ENCODE measurements at regions of chr14 and their contacts with region 1.

Region 1: DNA sequence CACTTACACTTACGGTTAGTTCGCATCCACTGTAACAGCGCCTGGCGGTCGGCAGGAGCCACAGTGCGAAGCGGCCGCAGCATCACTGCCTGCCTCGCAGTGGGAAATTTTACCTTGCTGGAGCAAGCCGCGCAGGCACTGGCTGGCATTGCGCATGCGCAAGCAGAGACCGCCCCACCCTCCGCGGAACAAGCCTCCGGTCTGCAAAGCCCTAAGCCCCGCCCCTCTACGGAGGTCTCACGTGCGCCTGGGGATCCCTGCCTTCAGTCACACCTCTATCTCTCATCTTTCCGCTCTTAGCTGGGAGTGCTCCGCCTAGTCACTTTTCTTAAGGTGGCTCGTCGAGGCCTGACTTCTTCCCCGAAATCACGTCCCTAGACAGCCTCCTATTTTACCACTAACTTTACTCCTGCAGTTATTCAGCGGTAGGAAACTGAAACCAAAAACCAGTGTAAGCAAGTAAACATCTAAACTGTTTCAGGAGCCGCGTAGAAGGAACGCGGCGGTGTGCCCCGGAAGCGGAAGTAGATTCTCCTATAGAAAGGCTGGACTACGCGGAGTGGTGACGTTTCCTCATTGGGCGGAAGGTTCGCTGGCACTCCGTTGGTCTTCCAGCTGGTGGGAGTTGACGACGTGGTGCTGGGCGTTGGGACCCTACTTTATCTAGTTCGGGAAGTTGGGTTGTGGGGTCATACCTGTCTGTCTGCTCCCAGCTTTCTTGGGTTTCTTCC is at the start of gene SRP54:
- DNase-seq: peak; percentile 100
- H3K4me3 Mint-ChIP-seq: no peak within 1 kb of the TSS
- H3K27ac Mint-ChIP-seq: no peak within 1 kb of the TSS
- H3K4me1 Mint-ChIP-seq: peaks cover 17% of the 10 kb centered on the region
- H3K27me3 Mint-ChIP-seq: no peaks in the 10 kb centered on the region
- total RNA-seq, gene SRP54: 73.6 and 73.8 TPM in 2 replicates

Region 2: DNA sequence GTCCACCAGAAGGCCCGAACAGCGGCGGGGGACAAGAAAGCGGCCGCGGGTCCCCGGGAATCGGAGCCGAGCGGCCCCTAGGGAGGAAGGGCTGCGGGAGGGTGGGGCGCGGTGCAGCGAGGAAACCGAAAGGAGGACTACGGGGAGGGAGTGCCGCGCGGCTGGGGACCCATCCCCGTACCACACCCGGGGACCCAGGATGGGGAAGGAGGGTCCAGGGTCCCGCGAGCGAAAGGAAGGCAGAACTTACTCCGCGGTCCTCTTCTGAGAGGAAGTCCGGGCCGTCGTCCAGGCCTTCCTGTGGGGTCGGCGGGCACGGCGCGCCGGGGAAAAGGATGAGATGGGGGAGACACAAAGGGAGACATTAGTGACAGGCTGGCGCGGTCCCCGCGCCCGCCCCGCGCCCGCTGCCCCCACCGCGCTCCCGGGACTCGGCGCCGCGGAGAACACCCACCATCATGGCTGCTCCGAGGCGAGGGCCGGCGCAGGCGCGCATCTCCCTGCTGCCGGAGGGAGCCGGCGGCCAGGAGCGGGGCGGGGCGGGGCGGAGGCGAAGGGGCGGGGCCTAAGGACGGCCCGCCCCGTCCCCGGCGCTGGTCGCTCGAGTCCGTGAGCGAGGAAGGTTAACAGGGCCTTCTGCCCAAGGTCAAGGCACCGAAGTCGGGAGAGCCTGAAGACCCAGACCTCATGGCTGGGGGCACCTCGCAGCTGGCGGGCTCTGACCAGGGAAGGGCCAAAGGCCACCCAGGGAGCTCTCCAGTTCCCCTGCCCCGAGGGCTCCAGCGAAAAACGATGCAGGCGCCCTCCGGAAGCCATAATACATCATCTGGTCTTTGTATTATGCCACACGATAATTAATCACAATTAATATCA is 352.7 kb before region 1 on chr14 and contains the start of gene SNX6:
- intact Hi-C with region 1: loop called (anchors 5 kb)
- DNase-seq: peak; percentile 94
- H3K4me3 Mint-ChIP-seq: peak within 1 kb of the TSS; percentile 91
- H3K27ac Mint-ChIP-seq: peak within 1 kb of the TSS; percentile 91
- H3K4me1 Mint-ChIP-seq: peaks cover 25% of the 10 kb centered on the region
- H3K27me3 Mint-ChIP-seq: peaks cover 13% of the 10 kb centered on the region
- total RNA-seq, gene SNX6: 68.6 and 70.4 TPM in 2 replicates

Region 3: DNA sequence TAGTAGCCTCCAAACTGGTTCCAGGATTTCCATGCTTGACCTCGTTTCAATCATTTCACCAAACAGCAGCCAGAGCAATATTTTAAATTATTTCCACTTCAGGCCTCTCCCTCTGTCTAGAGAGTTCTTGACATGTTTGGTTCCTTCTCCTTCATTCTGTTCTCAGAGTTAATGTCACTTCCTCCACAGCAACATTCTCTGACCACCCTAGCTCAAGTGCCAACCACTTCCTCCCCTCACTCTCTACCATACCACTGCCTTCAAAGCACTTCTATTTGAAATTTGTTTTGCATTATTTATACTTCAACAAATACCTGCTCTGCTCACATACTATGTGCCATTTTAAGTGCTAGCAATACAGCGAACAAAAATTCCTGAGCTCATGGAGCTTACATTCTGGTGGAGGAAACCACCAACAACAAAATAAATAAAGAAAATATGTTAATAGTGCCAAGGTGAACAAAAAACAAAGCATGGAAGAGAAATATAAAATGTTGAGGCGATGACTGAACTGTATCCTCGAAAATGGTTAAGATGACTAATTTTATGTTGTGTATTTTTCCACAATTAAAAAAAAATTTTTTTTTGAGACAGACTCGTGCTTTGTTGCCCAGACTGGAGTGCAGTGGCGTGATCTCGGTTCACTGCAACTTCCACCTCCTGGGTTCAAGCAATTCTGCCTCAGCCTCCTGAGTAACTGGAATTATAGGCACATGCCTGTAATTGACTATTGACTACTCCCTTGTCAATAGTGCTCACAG is 124.7 kb before region 1 on chr14:
- intact Hi-C with region 1: loop called (anchors 5 kb)
- DNase-seq: peak; percentile 76
- H3K4me3 Mint-ChIP-seq: peak overlapping the region; percentile 30
- H3K27ac Mint-ChIP-seq: peak overlapping the region; percentile 80
- H3K4me1 Mint-ChIP-seq: peaks cover 21% of the 10 kb centered on the region
- H3K27me3 Mint-ChIP-seq: no peaks in the 10 kb centered on the region

Region 4: GRCh38 chr14:35020713-35021112 is 38.1 kb after region 1 on chr14:
- intact Hi-C with region 1: no loop called
- DNase-seq: no peak
- H3K4me3 Mint-ChIP-seq: no peak overlapping the region
- H3K27ac Mint-ChIP-seq: no peak overlapping the region
- H3K4me1 Mint-ChIP-seq: peaks cover 2% of the 10 kb centered on the region
- H3K27me3 Mint-ChIP-seq: no peaks in the 10 kb centered on the region

Region 5: GRCh38 chr14:35046048-35046741 is 63.6 kb after region 1 on chr14 and contains the start of gene FAM177A1:
- intact Hi-C with region 1: loop called (anchors 1 kb)
- DNase-seq: peak; percentile 99
- H3K4me3 Mint-ChIP-seq: peak within 1 kb of the TSS; percentile 96
- H3K27ac Mint-ChIP-seq: peak within 1 kb of the TSS; percentile 99
- H3K4me1 Mint-ChIP-seq: peaks cover 28% of the 10 kb centered on the region
- H3K27me3 Mint-ChIP-seq: no peaks in the 10 kb centered on the region
- total RNA-seq, gene FAM177A1: 37.9 and 41.6 TPM in 2 replicates

Region 6: DNA sequence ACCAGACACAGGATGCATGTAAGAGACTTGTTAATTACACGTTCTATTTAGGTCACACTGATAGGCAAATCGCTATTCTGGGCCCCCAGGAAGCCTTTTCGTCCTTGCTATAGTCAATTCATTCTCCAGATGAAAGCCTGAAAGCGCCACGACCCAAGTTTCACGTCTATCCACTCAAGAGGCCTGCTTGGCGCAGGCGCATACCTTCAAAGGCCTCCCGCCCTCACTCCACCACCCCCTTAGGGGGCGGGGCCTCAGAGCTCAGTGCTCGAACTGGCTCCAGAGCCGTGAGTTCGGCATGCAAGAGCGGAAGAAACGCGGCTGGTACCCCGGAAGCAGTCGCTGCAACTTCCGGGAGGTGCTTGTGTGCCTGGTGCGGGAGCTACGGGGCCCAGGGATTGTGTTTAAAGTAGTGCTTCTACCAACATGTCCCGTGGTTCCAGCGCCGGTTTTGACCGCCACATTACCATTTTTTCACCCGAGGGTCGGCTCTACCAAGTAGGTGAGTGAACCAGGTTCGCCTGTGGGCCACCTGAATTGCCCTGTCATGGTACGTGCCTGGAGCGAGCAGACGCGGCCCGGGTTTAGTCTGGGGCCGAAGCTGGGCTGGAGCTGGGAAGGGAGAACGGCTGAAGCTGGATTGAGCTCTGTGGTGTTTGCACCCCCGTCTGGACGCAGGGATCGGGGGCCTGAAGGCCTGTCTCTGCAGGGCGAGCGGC is 309.6 kb after region 1 on chr14 and contains the start of gene PSMA6:
- intact Hi-C with region 1: loop called (anchors 1 kb)
- DNase-seq: peak; percentile 100
- H3K4me3 Mint-ChIP-seq: peak within 1 kb of the TSS; percentile 100
- H3K27ac Mint-ChIP-seq: peak within 1 kb of the TSS; percentile 98
- H3K4me1 Mint-ChIP-seq: peaks cover 49% of the 10 kb centered on the region
- H3K27me3 Mint-ChIP-seq: no peaks in the 10 kb centered on the region
- total RNA-seq, gene PSMA6: 501 and 522 TPM in 2 replicates

Measured in activated CD4-positive, alpha-beta T cell treated with anti-CD3 and anti-CD28 coated beads, Interleukin-2, amount 10 ng/mL, durations not matched to agents 24 days and 14 days (primary cell).